PC-9 (cell line): ENCODE measurements at regions of chr9 and their contacts with region 1.

Region 1: GRCh38 chr9:90546229-90546641 is 96.4 kb downstream of the DIRAS2 start:
- DNase-seq: peak; percentile 60 to 89
- H3K4me3 ChIP-seq: no peak overlapping the region
- H3K27ac ChIP-seq: no peak overlapping the region
- H3K4me1 ChIP-seq: peaks cover 10% of the 10 kb centered on the region; the same call in 1 of the 2 replicates
- H3K27me3 ChIP-seq: no peaks in the 10 kb centered on the region
- CTCF ChIP-seq: no peak

Region 2: DNA sequence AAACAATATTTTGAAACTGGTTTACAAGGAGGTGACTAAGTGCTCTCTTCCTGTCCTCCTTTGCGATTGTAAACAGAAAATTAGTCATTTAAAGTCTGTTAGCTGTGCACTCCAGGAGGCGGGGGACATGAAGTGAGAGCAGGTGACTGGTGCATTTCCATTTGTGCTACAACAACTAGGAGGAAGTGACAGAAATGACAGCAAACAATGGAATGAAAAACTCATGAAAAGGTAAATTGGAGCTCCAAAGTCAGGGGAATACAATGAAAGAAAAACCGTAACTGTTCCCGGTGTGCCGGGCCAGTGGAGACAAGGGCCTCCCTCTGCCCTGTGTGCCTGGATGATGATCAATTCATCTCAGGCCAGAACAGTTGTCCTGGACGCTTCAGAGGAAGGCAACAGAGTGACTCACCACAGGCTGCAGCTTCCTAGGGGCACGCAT is 501.5 kb before region 1 on chr9:
- CTCF ChIA-PET with region 1: no interaction called
- POLR2A ChIA-PET with region 1: no interaction called
- intact Hi-C with region 1: no loop called
- DNase-seq: peak in 1 of 2 experiments; percentile 65
- H3K4me3 ChIP-seq: no peak overlapping the region
- H3K27ac ChIP-seq: no peak overlapping the region
- H3K4me1 ChIP-seq: 0 out of 2 replicates have a peak, but pooled peaks cover 7% of the 10 kb centered on the region
- H3K27me3 ChIP-seq: peaks cover 29% of the 10 kb centered on the region
- CTCF ChIP-seq: no peak

Region 3: GRCh38 chr9:90271707-90272106 is 274.5 kb before region 1 on chr9:
- CTCF ChIA-PET with region 1: no interaction called
- POLR2A ChIA-PET with region 1: no interaction called
- intact Hi-C with region 1: no loop called
- DNase-seq: no peak
- H3K4me3 ChIP-seq: no peak overlapping the region
- H3K27ac ChIP-seq: no peak overlapping the region
- H3K4me1 ChIP-seq: no peaks in the 10 kb centered on the region
- H3K27me3 ChIP-seq: no peaks in the 10 kb centered on the region
- CTCF ChIP-seq: no peak

Region 4: DNA sequence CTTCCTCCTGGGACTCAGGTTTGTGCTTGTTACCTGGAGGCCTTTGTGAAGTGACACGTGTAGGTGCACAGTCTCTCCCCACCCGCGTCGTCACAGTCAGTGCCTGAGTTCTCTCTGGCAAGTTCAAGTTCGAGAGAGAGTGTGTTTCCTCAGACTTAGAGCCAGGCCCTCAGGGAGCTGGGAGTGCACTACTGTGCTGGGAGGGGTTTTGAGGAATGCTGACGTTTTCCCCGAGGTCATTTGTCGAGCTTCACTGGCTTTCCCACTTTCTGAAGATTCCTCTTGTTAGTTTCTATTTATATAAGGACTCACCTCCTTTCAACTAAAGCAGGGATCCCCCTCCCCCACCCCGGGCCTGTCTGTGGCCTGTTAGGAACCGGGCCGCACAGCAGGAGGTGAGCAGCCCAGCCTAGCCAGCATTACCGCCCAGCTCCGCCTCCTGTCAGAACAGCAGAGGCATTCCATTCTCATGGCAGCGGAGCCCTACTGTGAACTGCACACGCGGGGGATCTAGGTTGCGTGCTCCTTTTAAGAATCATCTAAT is 112.8 kb before region 1 on chr9:
- CTCF ChIA-PET with region 1: no interaction called
- POLR2A ChIA-PET with region 1: no interaction called
- intact Hi-C with region 1: loop called (anchors 1 kb)
- DNase-seq: peak; percentile 88 to 93
- H3K4me3 ChIP-seq: peak overlapping the region; percentile 55
- H3K27ac ChIP-seq: peak overlapping the region; percentile 93
- H3K4me1 ChIP-seq: peaks cover 31% of the 10 kb centered on the region
- H3K27me3 ChIP-seq: no peaks in the 10 kb centered on the region
- CTCF ChIP-seq: no peak

Region 5: GRCh38 chr9:90449213-90449925 is 96.9 kb before region 1 on chr9:
- CTCF ChIA-PET with region 1: no interaction called
- POLR2A ChIA-PET with region 1: no interaction called
- intact Hi-C with region 1: no loop called
- DNase-seq: no peak
- H3K4me3 ChIP-seq: no peak overlapping the region
- H3K27ac ChIP-seq: no peak overlapping the region
- H3K4me1 ChIP-seq: no peaks in the 10 kb centered on the region
- H3K27me3 ChIP-seq: no peaks in the 10 kb centered on the region
- CTCF ChIP-seq: no peak

Region 6: DNA sequence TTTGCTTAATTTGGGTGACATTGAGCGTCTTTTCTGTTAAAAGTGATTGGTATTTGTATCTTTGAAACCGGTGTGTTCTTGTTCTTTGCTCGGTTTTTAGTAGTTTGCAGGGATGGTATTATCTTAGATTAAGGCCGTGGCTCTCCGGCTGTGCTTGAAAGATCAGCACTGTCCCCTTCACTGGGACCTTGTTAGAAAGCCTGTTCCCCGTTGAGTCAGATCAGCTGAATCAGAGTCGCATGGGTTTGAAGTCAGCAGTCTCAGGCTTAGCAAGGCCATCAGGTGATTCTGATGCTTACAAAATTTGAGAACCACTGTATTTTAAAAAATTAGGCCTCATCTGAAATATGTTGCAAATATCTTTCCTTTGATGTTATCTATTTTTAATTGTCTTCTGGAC is 91.4 kb after region 1 on chr9:
- CTCF ChIA-PET with region 1: no interaction called
- POLR2A ChIA-PET with region 1: no interaction called
- intact Hi-C with region 1: loop called (anchors 5 kb)
- DNase-seq: no peak
- H3K4me3 ChIP-seq: no peak overlapping the region
- H3K27ac ChIP-seq: no peak overlapping the region
- H3K4me1 ChIP-seq: no peaks in the 10 kb centered on the region
- H3K27me3 ChIP-seq: no peaks in the 10 kb centered on the region
- CTCF ChIP-seq: no peak

Region 7: GRCh38 chr9:90766731-90767130 is 220.5 kb after region 1 on chr9:
- CTCF ChIA-PET with region 1: no interaction called
- POLR2A ChIA-PET with region 1: interaction called, 10 read pairs
- intact Hi-C with region 1: no loop called
- DNase-seq: no peak
- H3K4me3 ChIP-seq: no peak overlapping the region
- H3K27ac ChIP-seq: no peak overlapping the region
- H3K4me1 ChIP-seq: no peaks in the 10 kb centered on the region
- H3K27me3 ChIP-seq: no peaks in the 10 kb centered on the region
- CTCF ChIP-seq: no peak

Region 8: GRCh38 chr9:92543972-92544371 is 1997.7 kb after region 1 on chr9:
- CTCF ChIA-PET with region 1: no interaction called
- POLR2A ChIA-PET with region 1: interaction called, 22 read pairs
- intact Hi-C with region 1: no loop called
- DNase-seq: no peak
- H3K4me3 ChIP-seq: no peak overlapping the region
- H3K27ac ChIP-seq: no peak overlapping the region
- H3K4me1 ChIP-seq: no peaks in the 10 kb centered on the region
- H3K27me3 ChIP-seq: no peaks in the 10 kb centered on the region
- CTCF ChIP-seq: no peak